Head of caudate nucleus (tissue), 42 donors: ENCODE measurements at regions of chr2 and their contacts with region 1.

Region 1: GRCh38 chr2:138501425-138502283 is at the start of gene SPOPL:
- DNase-seq: peak; percentile 71 to 95 (median 90)

Region 2: DNA sequence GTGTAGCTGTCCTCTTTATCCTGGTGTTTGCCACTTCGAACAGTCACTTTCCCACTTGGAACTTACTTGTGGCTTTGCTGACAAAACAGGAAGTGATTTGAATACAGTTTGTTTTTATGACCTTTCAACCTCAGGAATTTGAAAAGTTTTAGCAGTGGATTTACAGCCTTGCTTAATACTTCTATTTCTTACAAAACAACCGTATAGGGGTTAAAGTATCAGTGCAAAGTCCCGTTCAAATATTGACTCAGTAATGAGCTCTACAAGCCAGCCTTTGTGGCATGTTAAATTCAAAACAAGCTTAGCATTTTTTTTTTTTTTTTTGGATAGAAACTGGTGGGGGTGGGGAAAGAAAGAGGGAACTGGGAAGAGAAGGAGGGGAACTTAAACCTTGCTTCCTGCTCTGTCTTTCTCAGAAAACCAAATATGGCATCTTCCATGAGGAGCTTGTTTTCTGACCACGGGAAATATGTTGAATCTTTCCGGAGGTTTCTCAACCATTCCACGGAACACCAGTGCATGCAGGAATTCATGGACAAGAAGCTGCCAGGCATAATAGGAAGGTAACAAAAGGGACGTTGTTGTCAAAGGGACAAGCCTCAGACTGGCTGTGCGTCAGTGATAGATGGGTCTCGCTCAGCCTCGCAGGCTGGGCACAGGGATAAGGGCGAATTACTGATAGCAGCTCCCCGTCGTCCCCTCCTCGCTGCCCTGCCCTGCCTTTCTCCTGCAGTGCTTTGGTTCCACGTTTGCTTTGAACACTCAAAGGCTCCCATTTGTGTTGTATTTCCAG is 537.4 kb before region 1 on chr2 and contains the start of gene HNMT:
- intact Hi-C with region 1: loop called (anchors 10 kb)
- DNase-seq: peak; percentile 14 to 76 (median 46)